Dendritic cell treated with granulocyte-macrophage colony-stimulating factor and Interleukin-4, amounts not matched to agents 40 ng/mL and 50 ng/mL, for 4 days (primary cell): ENCODE measurements at regions of chr11 and their contacts with region 1.

Region 1: DNA sequence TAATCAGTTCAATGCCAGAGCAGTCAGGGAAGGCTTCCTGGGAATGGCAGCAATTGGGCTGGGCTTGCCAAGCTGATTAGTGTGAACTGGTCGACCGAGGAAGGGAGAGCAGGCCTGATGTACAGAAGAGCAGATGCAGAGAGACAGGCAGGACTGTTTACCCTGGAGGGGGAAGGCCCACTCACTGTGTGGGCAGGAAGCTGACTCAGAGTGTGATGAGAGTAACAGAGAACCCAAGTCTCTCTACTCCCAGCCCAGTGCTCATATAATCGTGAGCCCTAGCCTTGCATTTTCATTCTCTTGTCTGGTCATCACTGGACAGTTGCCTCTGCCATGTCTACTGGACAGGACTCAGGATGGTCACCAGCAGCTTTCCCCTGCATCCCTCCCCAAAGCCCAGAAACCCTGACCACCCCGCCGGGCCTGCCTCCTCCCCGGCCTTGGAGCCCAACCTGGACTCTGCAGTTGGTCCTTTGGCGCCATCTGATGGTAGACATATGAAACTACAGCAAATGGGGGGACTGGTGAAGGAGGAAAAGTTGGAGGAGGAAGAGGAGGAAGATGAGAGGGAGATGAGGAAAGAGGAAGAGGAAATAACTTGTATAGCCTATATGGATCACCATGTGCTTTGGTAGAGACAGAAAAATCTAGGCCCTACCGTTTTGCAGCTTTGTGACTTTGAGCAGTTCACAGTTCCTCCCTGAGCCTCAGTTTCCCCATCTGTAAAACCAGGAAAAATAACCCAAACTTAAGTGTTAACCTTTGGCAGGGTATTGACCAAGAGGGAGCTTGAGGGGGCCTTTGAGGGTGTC is 43.4 kb upstream of the PRDM11 start:
- H3K4me3 Mint-ChIP-seq: no peak overlapping the region
- H3K27ac Mint-ChIP-seq: no peak overlapping the region
- H3K4me1 Mint-ChIP-seq: peaks cover 36% of the 10 kb centered on the region
- H3K27me3 Mint-ChIP-seq: peaks cover 27% of the 10 kb centered on the region

Region 2: DNA sequence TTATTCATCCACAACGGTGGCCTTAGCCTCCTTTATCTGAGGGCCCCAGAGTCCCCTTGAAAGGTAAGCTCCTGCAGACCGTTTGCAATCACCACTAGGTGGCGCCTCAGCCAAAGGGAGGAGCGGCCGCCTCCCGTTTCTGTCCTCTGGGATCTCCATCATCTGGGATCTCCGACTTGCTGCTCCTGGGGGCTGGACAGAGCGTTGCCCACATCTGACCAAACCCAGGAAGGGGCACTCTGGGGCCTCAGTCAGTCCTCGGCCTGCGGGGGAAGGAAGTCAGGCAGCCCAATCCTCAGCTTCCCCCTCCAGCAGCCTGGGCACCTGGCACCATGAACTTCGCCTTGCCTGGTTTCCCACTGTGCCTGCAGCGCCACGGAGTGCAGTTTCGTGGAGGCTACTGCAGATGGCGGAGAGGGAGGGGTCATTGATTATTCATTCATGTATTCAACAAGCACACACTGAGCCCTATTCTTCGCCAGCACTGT is 175.8 kb before region 1 on chr11:
- intact Hi-C with region 1: loop called (anchors 1 kb)
- H3K4me3 Mint-ChIP-seq: no peak overlapping the region
- H3K27ac Mint-ChIP-seq: no peak overlapping the region
- H3K4me1 Mint-ChIP-seq: no peaks in the 10 kb centered on the region
- H3K27me3 Mint-ChIP-seq: peaks cover 27% of the 10 kb centered on the region

Region 3: GRCh38 chr11:44936525-44936924 is 166.5 kb before region 1 on chr11:
- intact Hi-C with region 1: loop called (anchors 1 kb)
- H3K4me3 Mint-ChIP-seq: no peak overlapping the region
- H3K27ac Mint-ChIP-seq: no peak overlapping the region
- H3K4me1 Mint-ChIP-seq: peaks cover 35% of the 10 kb centered on the region
- H3K27me3 Mint-ChIP-seq: peaks cover 7% of the 10 kb centered on the region

Region 4: DNA sequence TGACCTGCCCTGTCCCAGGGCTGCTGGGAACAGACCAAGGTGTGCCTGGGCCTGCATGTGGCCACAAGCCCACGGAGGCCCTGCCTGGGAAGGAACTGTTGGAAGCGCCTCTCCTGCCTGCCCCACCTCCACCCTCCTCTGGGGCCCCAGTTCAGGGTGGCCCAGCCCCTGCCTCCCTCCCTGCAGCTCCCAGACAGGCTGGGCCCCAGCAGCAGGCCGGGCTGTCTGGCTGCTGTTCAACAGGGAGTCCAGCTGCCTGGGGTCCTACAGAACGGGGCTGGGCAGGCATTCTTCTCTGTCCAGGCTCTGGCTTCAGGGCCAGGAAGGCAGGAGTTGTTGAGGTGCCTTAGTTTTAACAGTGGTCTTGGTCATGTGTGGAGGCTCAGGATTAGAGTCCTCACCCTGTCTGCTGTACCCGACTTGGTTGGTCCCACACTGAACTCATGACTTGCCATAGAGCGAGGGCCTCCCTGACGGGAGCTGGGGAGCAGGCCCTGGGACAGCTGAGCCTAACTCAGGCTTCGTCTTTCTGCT is 55.2 kb after region 1 on chr11:
- intact Hi-C with region 1: no loop called
- H3K4me3 Mint-ChIP-seq: no peak overlapping the region
- H3K27ac Mint-ChIP-seq: no peak overlapping the region
- H3K4me1 Mint-ChIP-seq: peaks cover 6% of the 10 kb centered on the region
- H3K27me3 Mint-ChIP-seq: no peaks in the 10 kb centered on the region

Region 5: DNA sequence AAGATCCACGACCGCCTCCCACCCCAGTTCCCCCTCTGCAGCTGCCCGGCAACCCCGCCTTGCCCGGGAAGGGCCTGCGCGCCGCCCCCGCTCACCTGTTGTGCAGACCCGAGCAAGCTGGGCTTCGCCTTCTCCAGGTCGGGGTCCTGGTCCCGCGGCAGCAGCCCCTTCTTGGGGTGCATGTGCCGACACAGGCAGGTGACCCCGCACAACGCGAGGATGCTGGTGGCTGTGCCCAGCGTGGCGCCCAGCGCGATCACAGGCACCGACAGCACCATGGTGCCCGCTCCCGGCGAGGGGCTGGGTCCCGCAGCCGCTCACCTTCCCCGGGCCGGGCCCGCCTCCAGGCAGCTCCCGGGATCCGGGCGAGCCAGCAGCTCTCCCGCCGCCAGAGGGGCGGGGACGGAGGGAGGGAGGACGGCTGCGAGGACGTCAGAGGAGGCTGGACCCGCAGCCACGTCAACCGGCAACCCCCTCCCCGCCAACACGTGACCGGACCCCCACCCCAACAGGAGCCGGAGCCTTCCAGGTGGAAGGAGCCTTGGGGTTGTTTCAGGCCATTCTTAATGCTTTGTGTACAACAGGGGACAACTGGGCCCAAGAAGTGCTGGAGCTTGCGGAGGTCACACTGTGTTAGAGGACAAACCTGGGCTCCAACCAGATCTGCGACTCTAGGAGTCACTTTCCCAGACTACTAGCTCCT is 183.1 kb after region 1 on chr11 and contains the start of gene SYT13:
- intact Hi-C with region 1: no loop called
- H3K4me3 Mint-ChIP-seq: no peak within 1 kb of the TSS
- H3K27ac Mint-ChIP-seq: no peak within 1 kb of the TSS
- H3K4me1 Mint-ChIP-seq: no peaks in the 10 kb centered on the region
- H3K27me3 Mint-ChIP-seq: peaks cover 80% of the 10 kb centered on the region